ENCODE measurements at regions of chr6 and their contacts with region 1.

Region 1: DNA sequence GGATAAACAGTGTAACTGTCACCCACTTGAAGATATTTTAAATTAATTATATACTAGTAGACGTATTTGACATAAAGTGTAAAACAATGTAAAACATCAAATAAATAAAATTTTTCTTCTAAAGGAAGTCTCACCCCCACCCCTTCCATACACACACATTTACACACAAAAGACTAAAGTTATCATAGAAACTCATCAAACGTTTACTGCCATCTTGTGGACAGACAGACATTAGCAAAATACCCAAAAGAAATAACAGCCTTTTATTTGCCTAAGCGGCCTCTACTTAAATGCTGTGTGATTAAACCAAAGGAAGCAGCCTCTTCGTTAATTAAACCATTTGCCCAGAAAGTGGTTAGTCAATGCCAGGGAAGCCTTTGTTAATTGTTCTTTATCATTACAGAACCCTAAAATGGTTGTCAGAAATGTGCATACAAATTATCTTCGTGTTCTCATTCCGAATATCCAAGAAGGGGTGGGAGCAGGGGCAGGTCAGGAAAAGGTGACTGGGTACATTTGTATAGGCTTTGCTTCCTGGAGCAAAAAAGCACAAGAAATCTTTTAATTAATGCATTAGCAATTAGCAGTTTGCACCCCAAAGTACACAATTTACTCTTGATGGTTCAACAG is 176.2 kb upstream of the SASH1 start:
- DNase-seq: peak; percentile 49

Region 2: DNA sequence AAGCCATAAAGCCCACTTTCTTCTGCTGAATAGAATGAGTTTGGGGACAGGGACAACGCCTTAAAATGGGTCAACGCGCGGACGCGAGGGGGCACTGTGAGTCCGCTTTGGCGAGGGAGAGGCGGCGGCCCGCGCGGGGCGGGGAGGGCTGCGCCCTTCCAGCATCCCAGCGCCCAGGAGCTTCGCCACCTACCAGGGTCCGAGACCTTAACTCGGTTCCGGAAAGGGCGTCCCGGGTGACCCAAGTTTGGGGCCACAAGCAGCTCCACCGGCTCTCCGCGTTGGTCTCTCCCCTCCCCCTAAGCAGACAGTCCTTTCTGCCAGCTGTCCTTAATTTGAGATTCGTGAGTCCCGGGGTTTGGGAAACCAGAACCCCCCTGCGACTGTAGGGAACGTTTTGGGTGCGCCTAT is 659.7 kb before region 1 on chr6:
- CTCF ChIA-PET with region 1: interaction called, 18 read pairs
- POLR2A ChIA-PET with region 1: no interaction called
- DNase-seq: peak; percentile 89